ENCODE measurements at regions of chr2 and their contacts with region 1.

Region 1: DNA sequence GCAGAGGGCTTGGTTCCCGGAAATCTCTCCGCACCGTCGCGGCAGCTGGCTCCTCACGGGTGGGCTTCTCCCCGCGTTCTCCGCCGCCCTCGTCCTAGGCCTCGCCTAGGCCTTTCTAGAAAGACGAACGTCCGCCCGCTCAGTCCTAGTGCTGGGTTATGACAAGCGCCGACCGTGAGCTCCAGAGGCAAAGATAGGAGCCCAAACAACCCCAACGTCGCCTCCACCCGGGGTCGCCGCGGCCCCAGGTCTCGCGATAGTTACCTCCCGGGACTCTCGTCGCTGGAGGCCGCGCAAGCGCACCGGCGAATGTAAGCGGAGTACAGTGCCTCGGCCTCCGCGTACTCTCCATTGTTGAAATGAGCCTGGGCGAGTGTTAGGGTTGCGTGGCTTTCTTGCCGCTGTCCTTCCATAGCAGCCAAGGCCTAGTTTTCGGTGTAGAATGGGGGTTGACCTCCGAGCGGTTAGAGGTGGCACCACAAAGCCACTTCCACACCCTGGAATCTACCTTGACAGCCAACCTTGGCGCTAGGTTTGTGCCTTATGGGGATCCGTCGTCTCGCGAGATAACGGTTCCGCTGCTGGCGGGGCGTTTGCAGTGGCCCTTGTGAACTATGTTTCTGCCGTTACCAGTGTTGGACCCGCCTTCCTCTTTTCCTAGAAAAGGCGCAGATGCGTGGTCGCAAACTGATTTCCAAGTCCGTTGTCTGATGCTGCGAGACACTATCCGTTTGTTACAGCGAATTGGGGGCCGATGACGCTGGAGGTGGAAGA is at the start of gene TTC32:
- DNase-seq: peak; percentile 95
- H3K4me3 Mint-ChIP-seq: peak within 1 kb of the TSS; percentile 83
- H3K27ac Mint-ChIP-seq: peak within 1 kb of the TSS; percentile 93
- H3K4me1 Mint-ChIP-seq: peaks cover 38% of the 10 kb centered on the region
- H3K27me3 Mint-ChIP-seq: peaks cover 2% of the 10 kb centered on the region
- total RNA-seq, gene TTC32: 14.2 to 17.3 TPM

Region 2: DNA sequence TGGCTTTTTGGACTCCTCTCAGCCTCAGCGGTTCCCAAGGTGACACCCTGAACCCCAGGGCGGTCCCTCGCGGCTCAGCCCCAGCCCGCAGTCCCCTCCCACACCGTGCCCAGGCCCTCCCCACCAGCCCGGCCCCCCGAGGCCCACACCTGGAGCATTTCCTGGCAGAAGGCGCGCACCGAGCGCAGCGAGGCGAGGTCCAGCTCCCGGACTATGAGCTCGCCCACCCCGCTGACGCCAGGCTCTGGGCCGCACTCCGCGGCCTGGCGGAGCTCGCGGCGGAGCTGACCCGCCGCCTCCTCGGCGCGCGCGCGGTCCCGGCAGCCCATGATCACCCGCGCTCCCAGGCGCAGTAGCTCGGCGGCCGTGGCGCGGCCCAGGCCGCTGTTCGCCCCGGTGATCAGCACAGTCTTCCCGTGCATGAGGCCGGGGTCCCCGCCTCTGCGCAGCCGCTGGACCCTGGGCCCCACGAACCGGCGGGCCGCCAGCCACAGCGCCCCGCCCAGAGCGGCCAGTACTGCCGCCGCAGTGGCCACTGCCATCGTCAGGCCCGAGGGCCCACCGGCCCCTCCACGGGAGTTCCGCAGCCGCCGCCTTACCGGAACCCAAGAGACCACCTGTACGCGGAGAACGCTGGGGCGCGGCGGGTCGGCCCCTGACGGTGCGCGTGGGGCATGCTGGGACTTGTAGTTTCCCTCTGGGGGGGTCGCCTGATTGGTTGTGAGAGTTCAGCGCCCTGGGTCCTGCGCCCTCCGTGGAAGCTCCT is 1341.4 kb before region 1 on chr2 and contains the start of gene RDH14:
- CTCF ChIA-PET with region 1: no interaction called
- POLR2A ChIA-PET with region 1: interaction called, 9 read pairs
- intact Hi-C with region 1: loop called (anchors 1 kb)
- DNase-seq: peak; percentile 94
- H3K4me3 Mint-ChIP-seq: peak within 1 kb of the TSS; percentile 90
- H3K27ac Mint-ChIP-seq: peak within 1 kb of the TSS; percentile 89
- H3K4me1 Mint-ChIP-seq: peaks cover 33% of the 10 kb centered on the region
- H3K27me3 Mint-ChIP-seq: no peaks in the 10 kb centered on the region
- total RNA-seq, gene RDH14: 14.1 to 14.4 TPM

Region 3: DNA sequence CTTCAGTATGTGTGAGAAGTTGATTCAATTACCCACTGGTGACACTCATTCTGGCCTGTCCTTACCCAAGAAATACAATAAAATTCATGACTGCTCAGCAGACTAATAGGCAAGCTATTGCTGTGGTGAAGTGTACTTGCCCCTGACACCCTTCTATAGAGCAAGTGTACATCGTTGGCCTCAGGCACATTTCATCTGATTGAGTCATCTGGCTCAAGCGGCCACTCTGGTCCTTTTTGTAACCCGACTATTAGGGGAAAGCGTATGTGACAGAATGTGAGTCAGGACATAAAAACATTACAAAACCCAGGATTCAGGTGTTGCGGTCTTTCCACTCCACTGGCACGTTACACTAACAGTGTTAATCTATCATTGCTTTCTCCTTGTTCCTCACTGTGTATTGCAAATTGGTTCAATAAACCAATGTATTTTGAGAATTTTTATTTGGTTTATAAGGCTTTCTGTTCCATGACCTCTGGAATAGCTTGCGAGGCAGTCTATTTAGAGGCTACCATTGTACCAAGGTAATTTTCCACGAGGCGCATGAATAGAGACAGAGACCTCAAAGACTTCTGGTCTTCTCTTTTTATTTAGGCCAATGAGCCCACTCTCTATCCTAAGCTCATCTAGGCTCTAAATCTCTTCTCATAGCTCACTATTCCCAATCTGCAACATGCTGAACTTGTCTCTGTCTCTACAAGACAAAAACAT is 10.3 kb after region 1 on chr2:
- CTCF ChIA-PET with region 1: no interaction called
- POLR2A ChIA-PET with region 1: no interaction called
- intact Hi-C with region 1: no loop called
- DNase-seq: no peak
- H3K4me3 Mint-ChIP-seq: no peak overlapping the region
- H3K27ac Mint-ChIP-seq: no peak overlapping the region
- H3K4me1 Mint-ChIP-seq: no peaks in the 10 kb centered on the region
- H3K27me3 Mint-ChIP-seq: no peaks in the 10 kb centered on the region

Region 4: GRCh38 chr2:19989681-19990415 is 88.2 kb after region 1 on chr2 and contains the start of gene WDR35:
- CTCF ChIA-PET with region 1: no interaction called
- POLR2A ChIA-PET with region 1: no interaction called
- intact Hi-C with region 1: loop called (anchors 1 kb)
- DNase-seq: peak; percentile 94
- H3K4me3 Mint-ChIP-seq: peak within 1 kb of the TSS; percentile 90
- H3K27ac Mint-ChIP-seq: peak within 1 kb of the TSS; percentile 74
- H3K4me1 Mint-ChIP-seq: peaks cover 23% of the 10 kb centered on the region
- H3K27me3 Mint-ChIP-seq: peaks cover 9% of the 10 kb centered on the region
- total RNA-seq, gene WDR35: 6.0 to 7.1 TPM

Region 5: GRCh38 chr2:20097879-20098714 is 196.5 kb after region 1 on chr2:
- CTCF ChIA-PET with region 1: no interaction called
- POLR2A ChIA-PET with region 1: no interaction called
- intact Hi-C with region 1: loop called (anchors 2 kb)
- DNase-seq: peak; percentile 87
- H3K4me3 Mint-ChIP-seq: no peak overlapping the region
- H3K27ac Mint-ChIP-seq: no peak overlapping the region
- H3K4me1 Mint-ChIP-seq: peaks cover 2% of the 10 kb centered on the region
- H3K27me3 Mint-ChIP-seq: peaks cover 1% of the 10 kb centered on the region

Region 6: DNA sequence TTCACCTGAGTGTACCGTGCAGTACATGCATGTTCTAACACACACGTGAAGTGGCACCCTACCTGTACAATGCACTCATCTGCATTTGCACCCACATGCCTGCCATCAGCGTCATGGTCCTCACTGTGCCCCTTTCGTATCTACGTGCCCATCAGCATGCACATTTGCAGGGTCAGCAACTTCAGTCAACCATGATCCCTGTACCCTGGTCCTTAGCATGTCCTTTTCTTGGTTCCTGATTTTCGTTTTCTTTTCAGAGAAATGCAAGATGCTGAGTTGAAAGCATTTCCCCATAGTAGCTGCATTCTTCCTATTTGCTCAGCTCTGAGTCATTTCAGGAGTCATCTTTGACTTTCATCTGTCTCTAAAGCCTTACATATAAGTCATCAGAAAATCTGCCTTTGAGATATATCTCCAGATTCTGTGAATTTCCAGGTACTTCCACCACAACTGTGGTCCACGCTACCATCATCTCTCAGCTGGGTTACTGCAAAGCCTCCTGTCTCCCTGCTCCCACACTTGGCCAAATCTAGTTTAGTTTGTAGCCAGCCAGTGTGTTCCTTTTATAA is 463.7 kb after region 1 on chr2:
- CTCF ChIA-PET with region 1: no interaction called
- POLR2A ChIA-PET with region 1: no interaction called
- intact Hi-C with region 1: loop called (anchors 2 kb)
- DNase-seq: peak; percentile 83
- H3K4me3 Mint-ChIP-seq: peak overlapping the region; percentile 40
- H3K27ac Mint-ChIP-seq: peak overlapping the region; percentile 79
- H3K4me1 Mint-ChIP-seq: peaks cover 35% of the 10 kb centered on the region
- H3K27me3 Mint-ChIP-seq: peaks cover 7% of the 10 kb centered on the region